ENCODE measurements at regions of chr2 and their contacts with region 1.

Region 1: GRCh38 chr2:227238238-227239237 is 74.1 kb downstream of the COL4A3 start:
- DNase-seq: peak; percentile 66
- H3K4me3 ChIP-seq: no peak overlapping the region
- H3K27ac ChIP-seq: no peak overlapping the region
- H3K4me1 ChIP-seq: no peaks in the 10 kb centered on the region
- H3K27me3 ChIP-seq: no peaks in the 10 kb centered on the region
- CTCF ChIP-seq: peak; percentile 98

Region 2: GRCh38 chr2:227125506-227125905 is 113.0 kb before region 1 on chr2:
- intact Hi-C with region 1: loop called (anchors 1 kb)
- DNase-seq: no peak
- H3K4me3 ChIP-seq: no peak overlapping the region
- H3K27ac ChIP-seq: no peak overlapping the region
- H3K4me1 ChIP-seq: peaks cover 6% of the 10 kb centered on the region
- H3K27me3 ChIP-seq: peaks cover 11% of the 10 kb centered on the region
- CTCF ChIP-seq: no peak

Region 3: GRCh38 chr2:227163998-227164762 is 74.4 kb before region 1 on chr2 and contains the starts of genes COL4A3 and COL4A4:
- intact Hi-C with region 1: no loop called
- DNase-seq: peak; percentile 78
- H3K4me3 ChIP-seq: peak within 1 kb of the TSS; percentile 88
- H3K27ac ChIP-seq: peak within 1 kb of the TSS; percentile 87
- H3K4me1 ChIP-seq: peaks cover 28% of the 10 kb centered on the region
- H3K27me3 ChIP-seq: peaks cover 12% of the 10 kb centered on the region
- CTCF ChIP-seq: no peak
- total RNA-seq, gene COL4A3: 4.4 TPM
- total RNA-seq, gene COL4A4: 8.9 TPM

Region 4: GRCh38 chr2:227655454-227655853 is 416.9 kb after region 1 on chr2:
- intact Hi-C with region 1: no loop called
- DNase-seq: no peak
- H3K4me3 ChIP-seq: no peak overlapping the region
- H3K27ac ChIP-seq: no peak overlapping the region
- H3K4me1 ChIP-seq: no peaks in the 10 kb centered on the region
- H3K27me3 ChIP-seq: peaks cover 8% of the 10 kb centered on the region
- CTCF ChIP-seq: no peak